ENCODE measurements at regions of chr2 and their contacts with region 1.

Region 1: GRCh38 chr2:64453770-64454385 is at the start of gene LGALSL:
- DNase-seq: peak; percentile 67
- ATAC-seq: peak; percentile 79
- H3K4me3 ChIP-seq: peak within 1 kb of the TSS; percentile 75
- H3K27ac ChIP-seq: peak within 1 kb of the TSS; percentile 15
- H3K4me1 ChIP-seq: peaks cover 26% of the 10 kb centered on the region
- H3K27me3 ChIP-seq: no peaks in the 10 kb centered on the region
- CTCF ChIP-seq: no peak
- total RNA-seq, gene LGALSL: 12.1 and 16.0 TPM in 2 replicates

Region 2: GRCh38 chr2:64386676-64387075 is 67.2 kb before region 1 on chr2:
- CTCF ChIA-PET with region 1: no interaction called
- POLR2A ChIA-PET with region 1: interaction called, 14 read pairs
- intact Hi-C with region 1: no loop called
- DNase-seq: no peak
- ATAC-seq: no peak
- H3K4me3 ChIP-seq: no peak overlapping the region
- H3K27ac ChIP-seq: no peak overlapping the region
- H3K4me1 ChIP-seq: no peaks in the 10 kb centered on the region
- H3K27me3 ChIP-seq: no peaks in the 10 kb centered on the region
- CTCF ChIP-seq: no peak

Region 3: GRCh38 chr2:64426183-64426952 is 27.5 kb before region 1 on chr2:
- CTCF ChIA-PET with region 1: no interaction called
- POLR2A ChIA-PET with region 1: no interaction called
- intact Hi-C with region 1: loop called (anchors 2 kb)
- DNase-seq: peak; percentile 72
- ATAC-seq: peak; percentile 38
- H3K4me3 ChIP-seq: no peak overlapping the region
- H3K27ac ChIP-seq: no peak overlapping the region
- H3K4me1 ChIP-seq: peaks cover 13% of the 10 kb centered on the region
- H3K27me3 ChIP-seq: no peaks in the 10 kb centered on the region
- CTCF ChIP-seq: no peak

Region 4: GRCh38 chr2:64538764-64539433 is 85.0 kb after region 1 on chr2:
- CTCF ChIA-PET with region 1: no interaction called
- POLR2A ChIA-PET with region 1: no interaction called
- intact Hi-C with region 1: no loop called
- DNase-seq: no peak
- ATAC-seq: no peak
- H3K4me3 ChIP-seq: no peak overlapping the region
- H3K27ac ChIP-seq: no peak overlapping the region
- H3K4me1 ChIP-seq: peaks cover 72% of the 10 kb centered on the region
- H3K27me3 ChIP-seq: no peaks in the 10 kb centered on the region
- CTCF ChIP-seq: no peak

Region 5: DNA sequence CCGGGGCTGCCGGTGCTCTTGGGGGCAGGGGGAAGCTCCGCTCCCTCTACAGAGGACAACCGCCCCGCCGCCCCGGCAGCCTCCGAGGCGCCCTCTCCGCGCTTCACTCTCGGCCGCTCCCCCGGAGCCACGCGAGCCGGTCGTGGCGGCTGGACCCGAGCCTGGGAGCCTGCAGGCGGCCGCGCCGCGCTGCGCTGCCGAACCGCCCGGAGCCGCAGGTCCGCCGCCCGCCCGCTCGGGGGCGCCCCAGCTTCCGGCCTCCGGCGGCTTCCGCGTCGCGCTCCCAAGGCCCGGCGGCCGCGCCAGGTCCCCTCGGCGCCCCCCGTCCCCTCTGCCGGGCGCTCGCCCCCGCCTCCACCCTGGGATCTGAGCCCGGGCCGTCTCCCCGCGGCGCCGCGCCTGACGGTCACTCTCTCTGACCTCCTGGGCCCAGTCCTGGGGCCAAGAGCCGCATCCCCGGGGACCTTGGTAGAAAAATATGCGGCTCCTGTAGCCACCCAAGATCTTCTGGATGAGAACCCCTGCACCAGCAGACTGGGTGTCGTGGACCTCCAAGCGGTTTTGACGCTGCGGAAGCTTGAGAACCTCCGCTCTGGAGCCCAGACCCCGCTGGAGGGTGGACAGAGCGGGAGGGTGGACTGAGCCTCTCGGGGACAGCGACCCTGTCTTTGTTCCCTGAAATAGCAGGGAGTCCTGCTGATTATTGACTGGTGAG is 155.5 kb after region 1 on chr2:
- CTCF ChIA-PET with region 1: no interaction called
- POLR2A ChIA-PET with region 1: no interaction called
- intact Hi-C with region 1: no loop called
- DNase-seq: peak; percentile 32
- ATAC-seq: peak; percentile 58
- H3K4me3 ChIP-seq: no peak overlapping the region
- H3K27ac ChIP-seq: no peak overlapping the region
- H3K4me1 ChIP-seq: peaks cover 31% of the 10 kb centered on the region
- H3K27me3 ChIP-seq: no peaks in the 10 kb centered on the region
- CTCF ChIP-seq: no peak

Region 6: DNA sequence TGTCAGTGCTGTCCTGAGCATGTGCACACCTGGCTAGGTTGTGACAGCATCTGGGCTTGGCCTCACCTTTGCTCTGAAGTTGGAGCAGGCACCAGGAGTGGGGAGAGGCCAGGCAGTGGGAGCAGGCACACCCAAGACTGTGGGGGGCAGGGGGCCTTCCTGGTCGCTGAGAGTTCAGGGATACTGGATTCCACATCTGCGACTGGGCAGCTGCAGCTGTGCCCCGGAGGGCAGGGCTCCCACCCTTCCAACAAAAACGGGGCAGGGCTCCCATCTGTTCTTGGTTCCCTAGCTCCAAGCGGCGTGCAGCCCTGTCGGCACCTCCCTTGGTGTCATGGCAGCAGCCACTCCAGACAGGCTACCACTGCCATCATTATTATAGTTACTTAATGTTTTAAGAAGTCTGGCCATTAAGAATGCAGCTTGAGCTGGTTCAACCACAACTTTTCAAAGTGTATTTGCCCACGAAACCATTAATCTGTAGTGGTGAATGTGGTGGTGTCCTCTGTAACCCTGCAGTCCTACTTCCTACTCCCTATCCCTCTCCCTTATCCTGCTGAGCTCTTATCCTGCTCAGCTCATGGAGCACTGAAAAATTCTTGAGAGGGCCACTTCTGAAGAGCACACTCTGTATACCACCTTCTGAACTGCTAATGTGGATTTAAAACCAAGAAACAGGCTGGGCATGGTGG is 724.0 kb after region 1 on chr2:
- CTCF ChIA-PET with region 1: no interaction called
- POLR2A ChIA-PET with region 1: no interaction called
- intact Hi-C with region 1: no loop called
- DNase-seq: no peak
- ATAC-seq: no peak
- H3K4me3 ChIP-seq: no peak overlapping the region
- H3K27ac ChIP-seq: no peak overlapping the region
- H3K4me1 ChIP-seq: peaks cover 9% of the 10 kb centered on the region; the same call in 1 of the 2 replicates
- H3K27me3 ChIP-seq: no peaks in the 10 kb centered on the region
- CTCF ChIP-seq: no peak